HCT116 (cell line): ENCODE measurements at regions of chr3 and their contacts with region 1.

Region 1: DNA sequence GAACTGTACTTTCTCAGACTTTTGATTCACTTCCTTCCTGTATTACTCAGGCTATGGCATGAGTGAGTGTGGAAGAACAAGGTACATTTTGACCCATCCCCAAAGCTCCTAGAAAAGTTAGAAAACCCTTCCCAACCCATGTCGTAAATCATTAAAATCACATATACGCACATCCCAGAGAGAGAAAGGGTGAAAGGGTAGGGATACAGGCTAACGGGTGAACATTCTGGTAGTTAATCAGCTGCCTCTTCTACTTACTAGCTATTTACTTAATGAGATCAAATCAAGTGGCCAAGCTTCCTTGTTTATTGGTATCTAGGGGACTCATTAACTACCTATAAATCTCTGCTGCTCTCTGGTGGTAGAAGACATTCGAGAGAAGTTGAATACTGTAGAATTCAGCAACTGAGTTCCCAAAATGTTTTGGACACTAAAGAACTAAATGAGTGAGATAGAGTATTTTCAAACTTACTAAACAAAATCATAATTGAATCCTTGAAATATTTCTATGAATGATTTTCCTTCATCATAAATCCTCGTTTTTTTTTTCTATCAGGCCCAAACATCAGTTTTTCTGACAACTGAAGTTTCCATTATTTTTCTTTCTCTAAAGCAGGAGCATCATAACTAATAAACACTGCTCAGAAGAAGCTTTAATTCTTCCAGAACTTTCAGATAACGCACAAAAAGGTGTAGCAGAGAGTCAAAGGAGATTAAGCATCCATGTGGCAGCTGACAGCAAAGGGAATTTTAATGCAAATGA is 124.2 kb downstream of the IMPG2 start:
- DNase-seq: peak; percentile 48
- ATAC-seq: peak; percentile 84
- H3K4me3 ChIP-seq: no peak overlapping the region
- H3K27ac ChIP-seq: no peak overlapping the region
- H3K4me1 ChIP-seq: no peaks in the 10 kb centered on the region
- H3K27me3 ChIP-seq: no peaks in the 10 kb centered on the region
- CTCF ChIP-seq: peak; percentile 52 to 78 (median 69)
- POLR2A ChIP-seq: no peak
- RAD21 ChIP-seq: peak; percentile 85

Region 2: DNA sequence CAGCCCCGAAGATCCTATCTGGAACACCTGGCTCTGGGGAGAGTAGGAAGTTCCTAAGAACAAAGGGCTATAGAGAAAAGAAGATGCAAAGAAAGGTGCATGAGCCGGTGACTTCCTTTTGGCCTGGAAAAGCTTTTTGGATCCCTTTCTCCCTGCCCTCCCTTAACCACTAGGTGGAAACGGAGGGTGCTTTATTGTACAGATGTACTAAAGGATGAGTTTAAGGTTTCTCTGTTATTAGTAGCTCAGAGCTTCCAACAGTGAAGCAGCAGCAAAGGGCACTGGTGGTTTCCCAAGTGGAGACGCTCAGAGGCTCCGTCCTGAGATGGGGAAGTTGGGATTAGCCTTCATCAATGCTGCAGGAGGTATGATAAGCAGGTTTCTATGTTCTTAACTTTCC is 592.7 kb before region 1 on chr3:
- CTCF ChIA-PET with region 1: interaction called, 12 read pairs
- POLR2A ChIA-PET with region 1: no interaction called
- RAD21 ChIA-PET with region 1: interaction called in 1 of 2 experiments, 5 read pairs
- intact Hi-C with region 1: loop called (anchors 10 kb)
- DNase-seq: peak; percentile 41
- ATAC-seq: peak; percentile 94
- H3K4me3 ChIP-seq: no peak overlapping the region
- H3K27ac ChIP-seq: no peak overlapping the region
- H3K4me1 ChIP-seq: peaks cover 3 to 19% of the 10 kb centered on the region in 2 experiments; a peak in 3 of 4 replicates
- H3K27me3 ChIP-seq: no peaks in the 10 kb centered on the region
- CTCF ChIP-seq: peak; percentile 53 to 71 (median 66); a peak in 5 of 6 replicates
- POLR2A ChIP-seq: no peak
- RAD21 ChIP-seq: peak; percentile 65

Region 3: DNA sequence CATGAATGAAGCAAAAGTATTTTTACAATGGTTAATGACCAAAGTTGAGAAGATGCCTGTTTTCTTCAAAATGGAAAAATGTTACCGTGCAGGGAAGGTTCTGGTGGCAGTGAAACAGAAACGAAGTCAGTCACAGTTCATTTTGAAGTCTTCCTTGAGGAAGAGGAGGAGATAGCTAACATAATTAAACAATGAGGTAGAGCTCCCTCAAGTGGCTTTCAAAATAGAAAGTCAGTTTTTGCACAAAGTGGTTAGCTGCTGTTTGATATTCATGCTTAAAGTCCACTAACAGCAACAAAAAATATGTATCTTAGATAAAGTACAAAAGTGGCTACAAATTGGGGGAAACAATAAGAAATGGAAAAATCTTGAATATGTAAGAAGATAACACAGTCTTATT is 399.6 kb before region 1 on chr3:
- CTCF ChIA-PET with region 1: interaction called, 16 read pairs
- POLR2A ChIA-PET with region 1: no interaction called
- RAD21 ChIA-PET with region 1: no interaction called
- intact Hi-C with region 1: no loop called
- DNase-seq: peak; percentile 22
- ATAC-seq: peak; percentile 75
- H3K4me3 ChIP-seq: no peak overlapping the region
- H3K27ac ChIP-seq: no peak overlapping the region
- H3K4me1 ChIP-seq: peaks cover 0 to 6% of the 10 kb centered on the region in 2 experiments; a peak in 1 of 4 replicates
- H3K27me3 ChIP-seq: no peaks in the 10 kb centered on the region
- CTCF ChIP-seq: peak; percentile 26 to 50 (median 42); a peak in 4 of 6 replicates
- POLR2A ChIP-seq: no peak
- RAD21 ChIP-seq: peak; percentile 62

Region 4: GRCh38 chr3:100893590-100893989 is 302.5 kb before region 1 on chr3:
- CTCF ChIA-PET with region 1: interaction called, 51 read pairs
- POLR2A ChIA-PET with region 1: no interaction called
- RAD21 ChIA-PET with region 1: interaction called, 4 to 6 read pairs
- intact Hi-C with region 1: loop called (anchors 1 kb)
- DNase-seq: no peak
- ATAC-seq: peak; percentile 75
- H3K4me3 ChIP-seq: no peak overlapping the region
- H3K27ac ChIP-seq: no peak overlapping the region
- H3K4me1 ChIP-seq: no peaks in the 10 kb centered on the region
- H3K27me3 ChIP-seq: no peaks in the 10 kb centered on the region
- CTCF ChIP-seq: peak; percentile 53 to 71 (median 58); a peak in 5 of 6 replicates
- POLR2A ChIP-seq: no peak
- RAD21 ChIP-seq: peak; percentile 78

Region 5: DNA sequence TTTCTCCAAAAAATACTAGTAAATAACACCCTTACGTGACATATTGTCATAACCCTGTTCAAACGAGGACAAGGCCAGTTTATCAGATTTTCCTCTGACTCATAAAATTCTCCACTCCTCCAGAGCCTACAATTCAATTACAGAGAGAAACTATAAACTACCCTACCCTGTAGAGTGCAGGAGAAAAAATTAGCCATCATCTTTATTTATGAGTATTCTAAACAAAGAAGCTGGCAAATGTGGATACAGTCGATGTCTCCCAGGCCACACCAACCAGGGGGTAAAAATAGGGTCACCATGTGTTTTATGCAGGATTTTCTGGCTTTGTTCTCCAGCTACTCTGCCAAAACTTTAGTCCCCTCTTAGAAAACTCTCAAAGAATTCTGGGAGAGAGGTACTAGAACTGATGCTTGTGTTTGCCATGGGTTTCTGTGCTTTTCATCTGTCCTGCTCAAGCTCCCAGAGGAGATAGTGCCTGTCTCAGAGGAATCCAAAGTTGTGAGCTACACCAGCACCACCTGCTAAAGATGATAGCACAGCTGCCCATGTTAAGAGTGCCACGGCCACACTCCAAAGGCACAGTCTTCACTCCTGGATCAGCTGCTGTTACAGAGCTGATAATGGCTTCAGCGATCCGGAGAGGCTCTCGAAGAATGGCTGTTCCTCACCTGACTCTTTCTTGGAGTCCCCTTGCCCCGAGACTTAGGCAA is 25.9 kb before region 1 on chr3:
- CTCF ChIA-PET with region 1: no interaction called
- POLR2A ChIA-PET with region 1: no interaction called
- RAD21 ChIA-PET with region 1: no interaction called
- intact Hi-C with region 1: no loop called
- DNase-seq: no peak
- ATAC-seq: no peak
- H3K4me3 ChIP-seq: no peak overlapping the region
- H3K27ac ChIP-seq: no peak overlapping the region
- H3K4me1 ChIP-seq: no peaks in the 10 kb centered on the region
- H3K27me3 ChIP-seq: no peaks in the 10 kb centered on the region
- CTCF ChIP-seq: no peak
- POLR2A ChIP-seq: no peak
- RAD21 ChIP-seq: no peak

Region 6: GRCh38 chr3:101229681-101230080 is 33.5 kb after region 1 on chr3:
- CTCF ChIA-PET with region 1: no interaction called
- POLR2A ChIA-PET with region 1: no interaction called
- RAD21 ChIA-PET with region 1: no interaction called
- intact Hi-C with region 1: no loop called
- DNase-seq: no peak
- ATAC-seq: no peak; the same call in 1 of the 2 replicates
- H3K4me3 ChIP-seq: no peak overlapping the region
- H3K27ac ChIP-seq: no peak overlapping the region
- H3K4me1 ChIP-seq: no peaks in the 10 kb centered on the region
- H3K27me3 ChIP-seq: no peaks in the 10 kb centered on the region
- CTCF ChIP-seq: peak in 2 of 3 experiments; percentile 12 to 22; a peak in 1 of 6 replicates
- POLR2A ChIP-seq: no peak
- RAD21 ChIP-seq: peak; percentile 33; the same call in 1 of the 2 replicates

Region 7: DNA sequence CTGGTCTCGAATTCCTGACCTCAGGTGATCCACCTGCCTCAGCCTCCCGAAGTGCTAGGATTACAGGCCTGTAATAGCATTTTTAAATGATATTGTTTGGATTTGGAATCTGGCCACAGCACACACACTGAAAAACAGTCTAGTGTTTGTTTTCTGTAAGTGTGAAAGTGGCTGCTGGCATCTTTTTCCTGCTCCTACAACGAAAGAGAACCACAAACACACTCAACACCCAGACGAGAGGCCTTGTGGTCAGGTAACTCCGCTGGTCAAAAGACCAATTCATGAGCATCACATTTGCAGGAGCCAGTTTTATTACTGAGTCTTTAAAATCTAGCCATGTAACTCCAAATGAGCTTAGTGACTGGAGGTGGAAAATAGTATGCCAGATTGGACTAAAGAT is 74.0 kb after region 1 on chr3:
- CTCF ChIA-PET with region 1: no interaction called
- POLR2A ChIA-PET with region 1: no interaction called
- RAD21 ChIA-PET with region 1: no interaction called
- intact Hi-C with region 1: no loop called
- DNase-seq: no peak
- ATAC-seq: no peak
- H3K4me3 ChIP-seq: no peak overlapping the region
- H3K27ac ChIP-seq: no peak overlapping the region
- H3K4me1 ChIP-seq: no peaks in the 10 kb centered on the region
- H3K27me3 ChIP-seq: no peaks in the 10 kb centered on the region
- CTCF ChIP-seq: no peak
- POLR2A ChIP-seq: no peak
- RAD21 ChIP-seq: no peak

Region 8: GRCh38 chr3:101281521-101282030 is 85.4 kb after region 1 on chr3:
- CTCF ChIA-PET with region 1: no interaction called
- POLR2A ChIA-PET with region 1: no interaction called
- RAD21 ChIA-PET with region 1: no interaction called
- intact Hi-C with region 1: no loop called
- DNase-seq: no peak
- ATAC-seq: no peak
- H3K4me3 ChIP-seq: no peak overlapping the region
- H3K27ac ChIP-seq: no peak overlapping the region
- H3K4me1 ChIP-seq: no peaks in the 10 kb centered on the region
- H3K27me3 ChIP-seq: no peaks in the 10 kb centered on the region
- CTCF ChIP-seq: no peak
- POLR2A ChIP-seq: no peak
- RAD21 ChIP-seq: no peak